A549 (cell line): ENCODE measurements at regions of chr19 and their contacts with region 1.

Region 1: DNA sequence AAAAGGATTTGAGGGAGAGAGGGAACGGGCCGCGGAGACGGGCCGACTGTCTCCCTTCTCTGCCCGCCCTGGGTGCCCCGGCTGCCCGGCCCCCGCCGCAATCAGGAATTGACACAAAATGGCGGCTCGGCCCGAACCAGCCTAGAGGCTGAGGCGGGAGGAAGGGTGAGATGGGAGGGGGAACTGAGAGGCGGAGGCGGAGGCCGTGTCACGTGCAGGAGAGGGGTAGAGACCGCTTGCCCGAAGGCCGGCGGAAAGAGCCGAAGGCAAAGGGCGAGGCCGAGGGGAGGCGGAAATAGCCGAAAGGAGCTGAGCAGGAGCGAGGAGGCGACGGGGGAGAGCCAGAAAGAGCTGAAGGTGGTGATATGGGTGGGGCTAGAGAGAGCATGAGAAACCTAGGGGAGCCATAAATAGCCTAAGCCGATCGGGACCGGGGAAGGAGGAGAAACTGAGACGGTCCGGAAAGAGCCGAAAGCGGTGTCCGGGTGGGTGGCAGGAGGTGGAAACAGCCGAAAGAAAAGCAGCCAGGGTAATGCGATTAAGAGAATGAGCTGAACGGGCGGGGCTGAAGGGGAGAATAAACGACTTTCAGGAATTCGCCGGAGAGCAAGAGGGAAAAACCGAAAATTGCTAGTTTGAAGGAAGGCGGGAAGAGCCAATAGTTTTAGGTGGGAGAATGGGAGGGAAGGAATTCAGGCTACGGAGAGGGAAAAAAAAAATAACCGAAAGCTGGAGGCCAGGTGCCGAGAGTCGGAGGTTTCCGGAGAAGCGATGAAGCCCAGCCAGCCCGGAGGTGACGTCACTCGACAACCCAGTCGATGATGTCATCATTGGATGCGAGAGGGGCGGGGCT is at the start of gene ZC3H4:
- DNase-seq: peak; percentile 99 to 100
- ATAC-seq: peak; percentile 81 to 92
- H3K4me3 ChIP-seq: peak within 1 kb of the TSS; percentile 98
- H3K27ac ChIP-seq: peak within 1 kb of the TSS; percentile 99
- H3K4me1 ChIP-seq: peaks cover 27% of the 10 kb centered on the region
- CTCF ChIP-seq: no peak
- EP300 ChIP-seq: no peak
- POLR2A ChIP-seq: peak; percentile 75
- RAD21 ChIP-seq: no peak
- polyA plus RNA-seq, gene ZC3H4: 7.7 and 9.6 TPM in 2 replicates

Region 2: GRCh38 chr19:46788262-46788967 is 324.8 kb before region 1 on chr19 and contains the start of gene SLC1A5:
- CTCF ChIA-PET with region 1: no interaction called
- POLR2A ChIA-PET with region 1: interaction called, 10 read pairs
- DNase-seq: peak; percentile 99
- ATAC-seq: peak; percentile 51 to 77
- H3K4me3 ChIP-seq: peak within 1 kb of the TSS; percentile 66
- H3K27ac ChIP-seq: peak within 1 kb of the TSS; percentile 96 to 97
- H3K4me1 ChIP-seq: peaks cover 40% of the 10 kb centered on the region
- CTCF ChIP-seq: peak; percentile 4; the same call in 1 of the 3 replicates
- EP300 ChIP-seq: 0 out of 5 replicates have a peak, but pooled peaks of 1 of the 2 experiments have one; percentile 13
- POLR2A ChIP-seq: peak; percentile 100
- RAD21 ChIP-seq: peak; percentile 20 to 28; a peak in 3 of 5 replicates
- polyA plus RNA-seq, gene SLC1A5: 302 and 306 TPM in 2 replicates

Region 3: DNA sequence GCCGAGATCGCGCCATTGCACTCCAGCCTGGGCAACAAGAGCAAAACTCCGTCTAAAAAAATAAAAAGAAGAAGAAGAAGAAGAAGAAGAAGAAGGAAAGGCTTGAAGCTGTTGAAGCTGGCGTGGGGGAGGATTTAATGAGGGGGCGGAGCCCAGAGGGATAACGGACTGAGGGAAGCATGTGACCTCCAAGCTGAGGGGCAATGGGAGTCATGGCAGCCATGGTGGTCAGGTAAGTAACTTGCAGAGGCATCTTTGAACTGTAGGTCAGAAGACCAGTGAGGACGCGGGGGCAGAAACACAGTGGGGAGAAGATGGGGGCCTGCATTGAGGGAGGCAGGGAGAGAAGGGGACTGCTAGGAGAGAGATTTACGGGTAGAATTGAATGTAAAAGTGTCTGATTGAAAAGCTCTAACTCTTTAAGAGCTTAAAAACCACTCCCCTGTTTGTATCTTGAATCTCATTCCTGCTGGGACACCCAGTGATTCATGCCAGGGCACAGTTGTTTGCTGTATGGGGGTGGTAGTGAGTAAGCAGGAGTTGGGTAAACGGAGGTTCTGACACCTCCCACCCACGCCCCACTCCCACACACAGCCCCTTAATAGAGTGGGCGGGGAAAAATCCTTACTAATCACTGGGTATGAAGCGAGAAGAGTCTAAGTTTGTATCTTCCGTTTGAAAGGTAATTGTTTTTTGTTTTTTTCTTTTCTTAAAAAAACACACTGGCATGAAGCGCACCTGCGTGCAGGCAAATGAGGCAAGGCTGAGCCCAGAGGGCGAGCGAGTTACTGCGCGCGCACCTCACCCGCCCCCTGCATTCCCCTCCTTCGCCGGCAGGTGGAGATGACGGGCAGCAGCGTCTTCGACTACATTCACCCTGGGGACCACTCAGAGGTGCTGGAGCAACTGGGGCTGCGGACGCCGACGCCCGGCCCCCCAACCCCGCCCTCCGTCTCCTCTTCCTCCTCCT is 77.8 kb before region 1 on chr19:
- CTCF ChIA-PET with region 1: interaction called, 9 read pairs
- POLR2A ChIA-PET with region 1: interaction called, 18 read pairs
- DNase-seq: peak; percentile 92 to 99
- ATAC-seq: peak; percentile 81 to 89
- H3K4me3 ChIP-seq: peak overlapping the region; percentile 52
- H3K27ac ChIP-seq: peak overlapping the region; percentile 89
- H3K4me1 ChIP-seq: peaks cover 17% of the 10 kb centered on the region
- CTCF ChIP-seq: peak; percentile 81
- EP300 ChIP-seq: no peak
- POLR2A ChIP-seq: peak; percentile 36
- RAD21 ChIP-seq: peak; percentile 64 to 78

Region 4: GRCh38 chr19:47081111-47081510 is 32.1 kb before region 1 on chr19:
- CTCF ChIA-PET with region 1: interaction called, 39 read pairs
- POLR2A ChIA-PET with region 1: interaction called, 13 read pairs
- DNase-seq: no peak
- ATAC-seq: no peak
- H3K4me3 ChIP-seq: no peak overlapping the region
- H3K27ac ChIP-seq: no peak overlapping the region
- H3K4me1 ChIP-seq: peaks cover 8% of the 10 kb centered on the region
- CTCF ChIP-seq: no peak
- EP300 ChIP-seq: no peak
- POLR2A ChIP-seq: no peak
- RAD21 ChIP-seq: no peak

Region 5: GRCh38 chr19:47124937-47125668 is 11.9 kb after region 1 on chr19:
- CTCF ChIA-PET with region 1: interaction called, 30 read pairs
- POLR2A ChIA-PET with region 1: interaction called, 15 read pairs
- DNase-seq: peak; percentile 86 to 90
- ATAC-seq: peak; percentile 84 to 85
- H3K4me3 ChIP-seq: no peak overlapping the region
- H3K27ac ChIP-seq: peak overlapping the region in 1 of 2 experiments; percentile 51; a peak in 3 of 6 replicates
- H3K4me1 ChIP-seq: peaks cover 33% of the 10 kb centered on the region
- CTCF ChIP-seq: peak; percentile 95
- EP300 ChIP-seq: no peak
- POLR2A ChIP-seq: no peak
- RAD21 ChIP-seq: peak; percentile 91 to 95

Region 6: GRCh38 chr19:47203254-47203653 is 90.0 kb after region 1 on chr19:
- CTCF ChIA-PET with region 1: no interaction called
- POLR2A ChIA-PET with region 1: no interaction called
- DNase-seq: no peak
- ATAC-seq: no peak
- H3K4me3 ChIP-seq: no peak overlapping the region
- H3K27ac ChIP-seq: no peak overlapping the region
- H3K4me1 ChIP-seq: peaks cover 10% of the 10 kb centered on the region; the same call in 2 of the 3 replicates
- CTCF ChIP-seq: no peak
- EP300 ChIP-seq: no peak
- POLR2A ChIP-seq: no peak
- RAD21 ChIP-seq: no peak

Region 7: GRCh38 chr19:47225746-47226425 is 112.7 kb after region 1 on chr19:
- CTCF ChIA-PET with region 1: no interaction called
- POLR2A ChIA-PET with region 1: interaction called, 11 read pairs
- DNase-seq: peak; percentile 89 to 91
- ATAC-seq: peak; percentile 35 to 70
- H3K4me3 ChIP-seq: peak overlapping the region; percentile 89
- H3K27ac ChIP-seq: peak overlapping the region; percentile 97 to 98
- H3K4me1 ChIP-seq: peaks cover 36% of the 10 kb centered on the region
- CTCF ChIP-seq: peak; percentile 28; the same call in 1 of the 3 replicates
- EP300 ChIP-seq: peak in 1 of 2 experiments; percentile 51; a peak in 1 of 5 replicates
- POLR2A ChIP-seq: peak; percentile 100
- RAD21 ChIP-seq: peak in 1 of 2 experiments; percentile 30; a peak in 1 of 5 replicates